ENCODE measurements at regions of chr9 and their contacts with region 1.

Region 1: GRCh38 chr9:35603987-35604577 is 980 bp upstream of the TESK1 start:
- DNase-seq: peak; percentile 100
- H3K4me3 Mint-ChIP-seq: peak overlapping the region; percentile 98
- H3K27ac Mint-ChIP-seq: peak overlapping the region; percentile 97
- H3K4me1 Mint-ChIP-seq: peaks cover 27% of the 10 kb centered on the region
- H3K27me3 Mint-ChIP-seq: no peaks in the 10 kb centered on the region

Region 2: DNA sequence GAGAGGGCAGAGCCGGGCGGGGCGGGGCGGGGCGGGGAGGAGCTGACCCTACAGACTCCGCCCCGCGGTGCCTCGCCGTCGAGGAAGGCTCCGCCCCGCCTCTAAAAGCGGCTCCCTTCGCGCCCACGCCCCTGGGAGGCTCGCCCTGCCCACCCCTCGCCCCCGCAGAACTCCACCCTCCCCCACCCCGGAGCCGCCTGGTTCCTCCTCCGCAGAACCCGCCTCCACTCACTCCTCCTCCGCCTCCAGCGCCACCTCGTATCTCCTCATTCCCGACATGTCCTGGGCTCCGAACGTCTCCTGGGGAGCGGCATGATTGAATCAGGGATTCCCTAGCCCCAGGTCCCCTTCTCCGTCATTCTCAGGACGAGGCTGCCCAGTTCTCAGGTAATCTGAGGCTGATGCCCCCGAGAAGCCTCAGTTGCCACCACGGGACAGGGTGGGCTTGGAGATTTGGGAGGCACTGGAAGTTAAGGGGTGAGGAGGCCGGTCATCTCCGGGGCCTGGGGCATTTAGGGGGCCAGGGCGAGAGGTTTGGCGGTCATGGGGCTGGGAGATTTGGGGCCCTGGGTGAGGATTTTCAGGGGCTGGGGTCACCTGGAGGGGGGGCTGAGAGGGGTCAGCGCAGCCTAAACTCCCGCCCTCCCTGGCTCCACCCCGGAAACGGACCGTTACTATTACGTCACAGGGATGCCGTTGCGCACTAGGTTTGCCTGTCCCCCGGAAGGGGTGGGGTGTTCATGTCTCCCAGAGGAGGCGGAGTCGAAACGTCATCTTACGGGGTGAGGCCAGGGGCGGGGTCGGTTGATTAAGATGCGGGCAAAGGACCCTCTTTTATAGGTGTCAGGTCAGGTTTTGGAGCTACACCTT is 938.5 kb before region 1 on chr9:
- CTCF ChIA-PET with region 1: no interaction called
- intact Hi-C with region 1: loop called (anchors 10 kb)
- DNase-seq: peak; percentile 93
- H3K4me3 Mint-ChIP-seq: peak overlapping the region; percentile 77
- H3K27ac Mint-ChIP-seq: peak overlapping the region; percentile 80
- H3K4me1 Mint-ChIP-seq: peaks cover 39% of the 10 kb centered on the region
- H3K27me3 Mint-ChIP-seq: no peaks in the 10 kb centered on the region

Region 3: DNA sequence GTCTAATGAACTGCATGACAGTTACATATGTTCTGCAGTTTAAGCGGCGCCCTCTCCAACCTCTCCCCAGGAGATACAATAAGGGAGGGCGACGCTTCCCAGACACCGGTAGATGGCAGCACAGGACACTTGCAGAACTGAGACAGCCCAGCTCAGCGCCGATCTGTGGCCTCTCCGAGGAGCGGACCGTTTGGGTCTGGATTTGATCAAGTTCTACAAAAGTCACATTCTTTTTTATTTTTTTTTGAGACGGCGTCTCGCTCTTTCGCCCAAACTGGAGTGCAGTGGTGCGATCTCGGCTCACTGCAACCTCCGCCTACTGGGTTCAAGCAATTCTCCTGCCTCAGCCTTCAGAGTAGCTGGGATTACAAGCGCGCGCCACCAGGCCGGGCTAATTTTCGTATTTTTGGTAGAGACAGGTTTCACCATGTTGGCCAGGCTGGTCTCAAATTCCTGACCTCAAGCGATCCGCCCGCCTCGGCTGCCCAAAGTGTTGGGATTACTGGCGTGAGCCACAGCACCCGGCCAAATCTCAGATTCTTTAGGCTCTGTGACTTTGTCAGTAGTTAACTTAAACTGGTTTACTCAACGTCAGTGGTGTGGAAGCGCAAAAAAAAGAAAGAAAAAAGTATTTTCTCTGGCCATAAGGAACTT is 487.1 kb before region 1 on chr9:
- CTCF ChIA-PET with region 1: interaction called, 3 read pairs
- intact Hi-C with region 1: loop called (anchors 1 kb)
- DNase-seq: peak; percentile 94
- H3K4me3 Mint-ChIP-seq: peak overlapping the region; percentile 89
- H3K27ac Mint-ChIP-seq: peak overlapping the region; percentile 80
- H3K4me1 Mint-ChIP-seq: peaks cover 38% of the 10 kb centered on the region
- H3K27me3 Mint-ChIP-seq: no peaks in the 10 kb centered on the region

Region 4: GRCh38 chr9:35521706-35522105 is 82.4 kb before region 1 on chr9:
- CTCF ChIA-PET with region 1: no interaction called
- intact Hi-C with region 1: no loop called
- DNase-seq: no peak
- H3K4me3 Mint-ChIP-seq: no peak overlapping the region
- H3K27ac Mint-ChIP-seq: no peak overlapping the region
- H3K4me1 Mint-ChIP-seq: no peaks in the 10 kb centered on the region
- H3K27me3 Mint-ChIP-seq: no peaks in the 10 kb centered on the region

Region 5: GRCh38 chr9:35570709-35571504 is 33.2 kb before region 1 on chr9:
- CTCF ChIA-PET with region 1: interaction called, 9 read pairs
- intact Hi-C with region 1: loop called (anchors 2 kb)
- DNase-seq: peak; percentile 72
- H3K4me3 Mint-ChIP-seq: peak overlapping the region; percentile 16
- H3K27ac Mint-ChIP-seq: peak overlapping the region; percentile 88
- H3K4me1 Mint-ChIP-seq: peaks cover 36% of the 10 kb centered on the region
- H3K27me3 Mint-ChIP-seq: no peaks in the 10 kb centered on the region

Region 6: DNA sequence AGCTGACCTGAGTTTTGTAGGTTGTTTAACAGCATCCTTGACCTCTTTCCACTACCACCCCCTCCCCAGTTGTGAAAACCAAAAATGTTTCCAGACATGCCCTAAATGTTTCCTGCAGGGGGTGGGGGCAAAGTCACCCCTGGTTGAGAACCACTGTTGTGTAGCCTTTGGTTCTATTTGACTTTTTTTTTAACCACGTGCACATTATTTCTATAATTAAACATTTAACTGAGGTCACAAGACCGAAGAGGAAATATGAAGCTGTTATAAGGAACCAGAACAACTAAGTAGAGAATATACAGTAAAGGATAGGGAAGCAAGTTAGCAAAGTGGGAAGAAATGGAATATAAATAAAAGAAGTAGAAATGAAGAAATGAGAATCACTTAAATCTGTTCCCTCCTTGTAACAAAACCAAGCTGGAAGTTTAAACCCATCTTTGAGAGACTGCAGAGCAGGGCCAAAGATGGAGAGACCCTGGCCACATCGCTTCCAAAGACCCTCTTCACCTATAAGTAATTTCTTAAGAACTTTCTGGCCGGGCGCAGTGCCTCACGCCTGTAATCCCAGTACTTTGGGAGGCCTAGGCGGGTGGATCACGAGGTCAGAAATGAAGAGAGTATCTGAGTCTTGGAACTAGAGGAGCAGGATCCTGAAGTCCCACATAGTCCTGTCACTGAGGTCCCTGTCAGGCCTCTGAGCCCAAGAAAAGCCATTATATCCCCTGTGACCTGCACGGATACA is 32.2 kb after region 1 on chr9:
- CTCF ChIA-PET with region 1: no interaction called
- intact Hi-C with region 1: loop called (anchors 2 kb)
- DNase-seq: no peak
- H3K4me3 Mint-ChIP-seq: no peak overlapping the region
- H3K27ac Mint-ChIP-seq: no peak overlapping the region
- H3K4me1 Mint-ChIP-seq: peaks cover 46% of the 10 kb centered on the region
- H3K27me3 Mint-ChIP-seq: no peaks in the 10 kb centered on the region

Region 7: GRCh38 chr9:35689601-35690430 is 85.7 kb after region 1 on chr9 and contains the start of gene TPM2:
- CTCF ChIA-PET with region 1: no interaction called
- intact Hi-C with region 1: no loop called
- DNase-seq: no peak
- H3K4me3 Mint-ChIP-seq: peak within 1 kb of the TSS; percentile 78
- H3K27ac Mint-ChIP-seq: no peak within 1 kb of the TSS
- H3K4me1 Mint-ChIP-seq: peaks cover 18% of the 10 kb centered on the region
- H3K27me3 Mint-ChIP-seq: no peaks in the 10 kb centered on the region
- total RNA-seq, gene TPM2: 4.9 to 6.6 TPM

Region 8: GRCh38 chr9:35732122-35732799 is 128.2 kb after region 1 on chr9 and contains the starts of genes CREB3 and TLN1:
- CTCF ChIA-PET with region 1: interaction called, 3 read pairs
- intact Hi-C with region 1: loop called (anchors 1 kb)
- DNase-seq: peak; percentile 98
- H3K4me3 Mint-ChIP-seq: peak within 1 kb of the TSS; percentile 84
- H3K27ac Mint-ChIP-seq: peak within 1 kb of the TSS; percentile 90
- H3K4me1 Mint-ChIP-seq: peaks cover 16% of the 10 kb centered on the region
- H3K27me3 Mint-ChIP-seq: no peaks in the 10 kb centered on the region
- total RNA-seq, gene CREB3: 13.7 to 13.8 TPM
- total RNA-seq, gene TLN1: 190 TPM

Region 9: GRCh38 chr9:35829084-35829763 is 225.1 kb after region 1 on chr9 and contains the start of gene TMEM8B:
- CTCF ChIA-PET with region 1: no interaction called
- intact Hi-C with region 1: loop called (anchors 1 kb)
- DNase-seq: peak; percentile 96
- H3K4me3 Mint-ChIP-seq: peak within 1 kb of the TSS; percentile 89
- H3K27ac Mint-ChIP-seq: peak within 1 kb of the TSS; percentile 59
- H3K4me1 Mint-ChIP-seq: peaks cover 24% of the 10 kb centered on the region
- H3K27me3 Mint-ChIP-seq: peaks cover 2% of the 10 kb centered on the region
- total RNA-seq, gene TMEM8B: 6.2 to 6.6 TPM